Mucosa of descending colon (tissue), 3 donors: ENCODE measurements at regions of chr19 and their contacts with region 1.

Region 1: GRCh38 chr19:44954824-44955586 is at the start of gene CLPTM1:
- DNase-seq: peak; percentile 97 to 98 (median 97)
- ATAC-seq: peak; percentile 97
- H3K4me3 ChIP-seq: peak within 1 kb of the TSS; percentile 100
- H3K4me1 ChIP-seq: peaks cover 30% of the 10 kb centered on the region
- CTCF ChIP-seq: no peak
- total RNA-seq, gene CLPTM1: 98.3 to 125 (median 114) TPM

Region 2: DNA sequence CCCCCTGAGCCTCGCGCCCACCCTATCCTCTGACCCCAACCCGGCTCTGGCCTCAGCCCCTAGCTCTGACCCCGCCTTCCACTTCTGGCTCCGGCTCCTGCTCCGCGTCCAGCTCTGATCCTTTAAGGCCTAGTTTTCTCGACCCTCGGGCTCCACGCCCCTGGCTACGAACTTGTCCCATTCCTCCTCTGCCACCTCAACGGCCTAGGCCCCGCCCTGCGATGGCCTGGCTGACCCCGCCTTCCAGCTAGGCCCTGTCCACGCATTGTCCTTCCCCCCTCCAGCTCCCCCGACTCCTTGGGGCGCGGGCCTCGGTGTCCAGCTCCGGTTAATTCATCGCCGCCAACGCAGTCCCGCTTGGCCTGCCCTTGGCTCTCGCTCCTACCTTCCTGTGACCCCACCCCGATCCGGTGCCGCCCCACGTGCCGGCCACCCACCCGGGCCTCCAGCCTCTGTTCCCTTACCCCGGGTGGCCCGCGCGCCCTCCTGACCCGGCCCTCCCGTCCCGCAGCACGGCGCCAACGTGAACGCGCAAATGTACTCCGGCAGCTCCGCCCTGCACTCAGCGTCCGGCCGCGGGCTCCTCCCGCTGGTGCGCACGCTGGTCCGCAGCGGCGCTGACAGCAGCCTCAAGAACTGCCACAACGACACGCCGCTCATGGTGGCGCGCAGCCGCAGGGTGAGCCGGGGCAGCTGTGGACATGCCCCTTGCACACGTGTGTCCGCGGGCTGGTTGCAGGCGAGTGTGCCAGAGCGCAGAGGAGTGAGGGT is 197.1 kb before region 1 on chr19:
- intact Hi-C with region 1: no loop called
- DNase-seq: peak in 2 of 3 donors; percentile 61 to 63
- ATAC-seq: no peak
- H3K4me3 ChIP-seq: no peak overlapping the region
- H3K4me1 ChIP-seq: peaks cover 19% of the 10 kb centered on the region
- CTCF ChIP-seq: no peak

Region 3: DNA sequence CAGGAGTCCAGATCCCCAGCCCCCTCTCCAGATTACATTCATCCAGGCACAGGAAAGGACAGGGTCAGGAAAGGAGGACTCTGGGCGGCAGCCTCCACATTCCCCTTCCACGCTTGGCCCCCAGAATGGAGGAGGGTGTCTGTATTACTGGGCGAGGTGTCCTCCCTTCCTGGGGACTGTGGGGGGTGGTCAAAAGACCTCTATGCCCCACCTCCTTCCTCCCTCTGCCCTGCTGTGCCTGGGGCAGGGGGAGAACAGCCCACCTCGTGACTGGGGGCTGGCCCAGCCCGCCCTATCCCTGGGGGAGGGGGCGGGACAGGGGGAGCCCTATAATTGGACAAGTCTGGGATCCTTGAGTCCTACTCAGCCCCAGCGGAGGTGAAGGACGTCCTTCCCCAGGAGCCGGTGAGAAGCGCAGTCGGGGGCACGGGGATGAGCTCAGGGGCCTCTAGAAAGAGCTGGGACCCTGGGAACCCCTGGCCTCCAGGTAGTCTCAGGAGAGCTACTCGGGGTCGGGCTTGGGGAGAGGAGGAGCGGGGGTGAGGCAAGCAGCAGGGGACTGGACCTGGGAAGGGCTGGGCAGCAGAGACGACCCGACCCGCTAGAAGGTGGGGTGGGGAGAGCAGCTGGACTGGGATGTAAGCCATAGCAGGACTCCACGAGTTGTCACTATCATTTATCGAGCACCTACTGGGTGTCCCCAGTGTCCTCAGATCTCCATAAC is 49.4 kb before region 1 on chr19 and contains the start of gene APOE:
- intact Hi-C with region 1: loop called in 1 of 2 experiments (anchors 5 kb)
- DNase-seq: no peak
- ATAC-seq: no peak
- H3K4me3 ChIP-seq: no peak within 1 kb of the TSS
- H3K4me1 ChIP-seq: peaks cover 6% of the 10 kb centered on the region
- CTCF ChIP-seq: no peak
- total RNA-seq, gene APOE: 32.7 to 74.6 (median 46.2) TPM

Region 4: GRCh38 chr19:45016388-45017319 is 61.6 kb after region 1 on chr19:
- intact Hi-C with region 1: no loop called
- DNase-seq: peak in 2 of 3 donors; percentile 71 to 80
- ATAC-seq: peak; percentile 86
- H3K4me3 ChIP-seq: no peak overlapping the region
- H3K4me1 ChIP-seq: no peaks in the 10 kb centered on the region
- CTCF ChIP-seq: peak; percentile 38